ENCODE measurements at regions of chr4 and their contacts with region 1.

Region 1: DNA sequence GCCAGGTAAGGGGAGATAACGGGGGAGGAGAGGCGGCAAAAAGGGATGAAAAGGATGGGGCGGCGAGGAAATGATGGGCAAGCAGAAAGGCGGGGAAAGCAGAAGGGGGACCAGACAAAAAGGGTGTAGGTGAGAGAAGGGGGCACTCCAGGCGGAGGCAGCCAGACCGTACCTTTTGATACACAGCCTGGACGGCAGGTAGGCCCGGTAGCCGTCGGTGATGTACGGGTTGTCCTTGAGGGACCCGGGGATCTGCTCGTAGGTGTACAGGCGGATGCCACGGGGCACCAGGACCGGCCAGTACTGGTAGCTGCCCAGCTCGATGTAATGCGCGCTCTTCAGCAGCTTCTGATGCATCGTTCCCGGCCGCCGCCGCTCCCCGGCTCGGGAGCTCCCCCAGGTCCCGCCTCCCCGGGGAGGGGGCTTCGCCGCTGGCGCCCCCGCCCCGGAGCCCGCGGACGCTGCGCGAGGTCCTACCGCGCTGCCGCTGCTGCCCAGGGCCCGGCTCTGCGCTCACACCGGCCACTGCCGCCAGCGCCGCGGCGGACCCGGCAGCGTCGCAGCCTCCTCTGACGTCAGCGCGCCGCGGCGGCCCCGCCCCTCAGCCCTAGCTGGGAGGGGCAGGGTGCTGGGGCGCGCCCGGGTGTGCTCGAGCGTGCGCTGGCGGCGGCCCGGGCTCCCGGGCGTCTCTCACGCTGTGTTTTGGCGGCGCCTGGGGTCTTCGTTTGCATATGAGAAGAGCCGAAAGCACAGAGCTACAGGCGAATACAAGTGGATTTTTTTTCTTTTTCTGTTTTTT is at the start of gene PAQR3:
- DNase-seq: peak; percentile 75 to 86 (median 84)
- H3K4me3 ChIP-seq: peak within 1 kb of the TSS; percentile 74 to 75
- H3K4me3 Mint-ChIP-seq: peak within 1 kb of the TSS; percentile 95 to 100 (median 98)
- H3K27ac ChIP-seq: peak within 1 kb of the TSS; percentile 75
- H3K27ac Mint-ChIP-seq: peak within 1 kb of the TSS; percentile 90 to 99 (median 97)
- H3K4me1 ChIP-seq: peaks cover 36% of the 10 kb centered on the region
- H3K4me1 Mint-ChIP-seq: peaks cover 25 to 46% (median 35%) of the 10 kb centered on the region in 4 donors
- H3K27me3 ChIP-seq: no peaks in the 10 kb centered on the region
- H3K27me3 Mint-ChIP-seq: peaks cover 10 to 13% of the 10 kb centered on the region in 2 donors
- total RNA-seq, gene PAQR3: 10.2 to 12.1 TPM

Region 2: DNA sequence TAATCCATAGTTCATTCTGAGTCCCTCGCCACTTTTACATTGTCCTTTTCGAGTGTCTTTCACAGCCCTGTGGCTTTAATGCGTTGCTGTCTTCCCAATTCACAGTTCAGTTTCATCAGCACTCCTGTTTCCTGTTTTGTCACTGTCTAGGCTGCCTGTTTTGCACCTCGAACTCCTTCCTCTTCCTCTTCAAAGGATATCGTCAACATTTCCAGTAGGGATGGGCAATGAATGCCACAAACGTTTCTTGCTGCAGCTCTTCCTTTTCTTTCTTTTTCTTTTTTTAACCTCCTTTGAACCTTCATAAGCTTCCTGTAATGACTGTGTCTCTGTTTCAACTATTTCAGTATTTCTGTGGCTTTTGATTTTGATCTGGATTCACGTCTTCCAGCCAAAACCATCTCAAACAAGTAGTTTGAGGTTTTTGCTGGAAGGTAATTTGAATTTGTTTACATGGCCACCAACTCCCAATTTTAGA is 282.1 kb before region 1 on chr4:
- CTCF ChIA-PET with region 1: no interaction called
- POLR2A ChIA-PET with region 1: no interaction called
- intact Hi-C with region 1: loop called (anchors 5 kb)
- DNase-seq: peak in 3 of 5 donors; percentile 13 to 20 (median 14)
- H3K4me3 ChIP-seq: peak overlapping the region in 1 of 2 donors; percentile 13
- H3K4me3 Mint-ChIP-seq: peak overlapping the region; percentile 63 to 83 (median 78)
- H3K27ac ChIP-seq: no peak overlapping the region
- H3K27ac Mint-ChIP-seq: peak overlapping the region; percentile 1 to 86 (median 21)
- H3K4me1 ChIP-seq: peaks cover 26% of the 10 kb centered on the region
- H3K4me1 Mint-ChIP-seq: peaks cover 20 to 24% (median 24%) of the 10 kb centered on the region in 4 donors
- H3K27me3 ChIP-seq: no peaks in the 10 kb centered on the region
- H3K27me3 Mint-ChIP-seq: no peaks in the 10 kb centered on the region

Region 3: DNA sequence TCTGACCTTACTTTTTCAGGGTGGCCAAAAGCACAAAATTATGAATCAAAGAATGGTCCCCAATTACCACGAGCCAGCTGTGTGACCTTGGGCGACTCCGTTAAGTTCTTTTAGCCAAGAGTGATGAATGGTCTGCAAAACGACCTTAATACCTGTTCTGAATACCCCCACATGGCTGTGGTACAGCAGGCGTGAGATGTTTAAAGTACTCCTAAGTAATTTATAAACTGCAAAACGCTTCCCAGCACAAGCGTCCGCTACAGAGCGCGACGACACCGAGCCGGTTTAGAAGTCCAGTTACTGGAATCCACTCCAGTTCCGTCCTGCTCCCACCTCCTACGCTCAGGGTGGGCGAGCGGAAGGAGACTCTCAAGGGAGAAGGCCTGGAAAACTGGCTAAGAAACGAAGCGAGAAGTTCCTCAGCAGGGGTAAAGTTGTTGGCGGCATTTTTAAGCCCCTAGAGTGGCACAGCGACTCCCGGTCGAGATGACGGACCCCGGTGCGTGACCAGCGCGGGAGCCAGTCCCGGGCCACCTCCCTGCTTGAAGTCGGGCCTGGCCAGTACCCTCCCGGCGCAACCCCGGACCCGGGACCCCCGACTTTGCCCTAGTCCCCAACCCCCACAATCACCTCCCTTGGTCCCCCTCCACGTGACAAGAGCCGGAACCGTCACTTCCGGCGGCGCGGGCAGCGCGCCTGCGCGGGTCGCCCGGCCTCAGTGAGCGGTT is 163.6 kb before region 1 on chr4:
- CTCF ChIA-PET with region 1: no interaction called
- POLR2A ChIA-PET with region 1: interaction called, 3 read pairs
- intact Hi-C with region 1: loop called (anchors 1 kb)
- DNase-seq: peak; percentile 83 to 90 (median 89)
- H3K4me3 ChIP-seq: peak overlapping the region; percentile 79 to 91
- H3K4me3 Mint-ChIP-seq: peak overlapping the region; percentile 93 to 96 (median 95)
- H3K27ac ChIP-seq: peak overlapping the region; percentile 77
- H3K27ac Mint-ChIP-seq: peak overlapping the region; percentile 92 to 98 (median 96)
- H3K4me1 ChIP-seq: peaks cover 13% of the 10 kb centered on the region
- H3K4me1 Mint-ChIP-seq: peaks cover 12 to 22% (median 15%) of the 10 kb centered on the region in 4 donors
- H3K27me3 ChIP-seq: no peaks in the 10 kb centered on the region
- H3K27me3 Mint-ChIP-seq: no peaks in the 10 kb centered on the region

Region 4: GRCh38 chr4:78951862-78952472 is 12.9 kb after region 1 on chr4:
- CTCF ChIA-PET with region 1: interaction called, 47 read pairs
- POLR2A ChIA-PET with region 1: interaction called, 3 read pairs
- intact Hi-C with region 1: loop called (anchors 1 kb)
- DNase-seq: peak in 4 of 5 donors; percentile 41 to 45 (median 41)
- H3K4me3 ChIP-seq: no peak overlapping the region
- H3K4me3 Mint-ChIP-seq: no peak overlapping the region
- H3K27ac ChIP-seq: no peak overlapping the region
- H3K27ac Mint-ChIP-seq: no peak overlapping the region
- H3K4me1 ChIP-seq: no peaks in the 10 kb centered on the region
- H3K4me1 Mint-ChIP-seq: no peaks in the 10 kb centered on the region
- H3K27me3 ChIP-seq: no peaks in the 10 kb centered on the region
- H3K27me3 Mint-ChIP-seq: peaks cover 12 to 18% of the 10 kb centered on the region in 2 donors

Region 5: DNA sequence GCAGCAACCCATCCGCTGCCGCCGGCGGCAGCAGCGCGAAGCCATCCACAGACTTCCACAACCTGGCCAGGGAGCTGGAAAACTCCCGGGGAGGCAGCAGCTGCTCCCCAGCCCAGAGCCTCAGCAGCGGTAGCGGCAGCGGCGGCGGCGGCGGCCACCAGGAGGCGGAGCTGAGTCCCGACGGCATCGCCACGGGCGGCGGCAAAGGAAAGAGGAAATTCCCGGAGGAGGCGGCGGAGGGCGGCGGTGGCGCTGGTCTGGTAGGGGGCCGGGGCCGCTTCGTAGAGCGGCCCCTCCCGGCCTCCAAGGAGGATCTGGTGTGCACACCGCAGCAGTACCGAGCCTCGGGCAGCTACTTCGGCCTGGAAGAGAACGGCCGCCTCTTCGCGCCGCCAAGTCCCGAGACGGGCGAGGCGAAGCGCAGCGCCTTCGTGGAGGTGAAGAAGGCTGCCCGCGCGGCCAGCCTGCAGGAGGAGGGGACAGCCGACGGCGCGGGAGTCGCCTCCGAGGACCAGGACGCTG is 1263.2 kb after region 1 on chr4:
- CTCF ChIA-PET with region 1: interaction called, 4 read pairs
- POLR2A ChIA-PET with region 1: no interaction called
- intact Hi-C with region 1: loop called (anchors 5 kb)
- DNase-seq: peak; percentile 72 to 81 (median 77)
- H3K4me3 ChIP-seq: peak overlapping the region; percentile 23 to 77
- H3K4me3 Mint-ChIP-seq: peak overlapping the region; percentile 82 to 94 (median 88)
- H3K27ac ChIP-seq: peak overlapping the region; percentile 82
- H3K27ac Mint-ChIP-seq: peak overlapping the region; percentile 89 to 93 (median 91)
- H3K4me1 ChIP-seq: peaks cover 17% of the 10 kb centered on the region
- H3K4me1 Mint-ChIP-seq: peaks cover 23 to 34% (median 27%) of the 10 kb centered on the region in 4 donors
- H3K27me3 ChIP-seq: no peaks in the 10 kb centered on the region
- H3K27me3 Mint-ChIP-seq: no peaks in the 10 kb centered on the region